Aorta (tissue), 5 donors: ENCODE measurements at regions of chr16 and their contacts with region 1.

Region 1: GRCh38 chr16:3880623-3881498 is at the start of gene CREBBP:
- DNase-seq: peak; percentile 89 to 93
- ATAC-seq: peak; percentile 95
- H3K4me3 ChIP-seq: peak within 1 kb of the TSS; percentile 99
- H3K27ac ChIP-seq: peak within 1 kb of the TSS; percentile 82 to 98
- H3K4me1 ChIP-seq: no peaks in the 10 kb centered on the region
- H3K27me3 ChIP-seq: no peaks in the 10 kb centered on the region
- total RNA-seq, gene CREBBP: 80.4 to 103 TPM

Region 2: DNA sequence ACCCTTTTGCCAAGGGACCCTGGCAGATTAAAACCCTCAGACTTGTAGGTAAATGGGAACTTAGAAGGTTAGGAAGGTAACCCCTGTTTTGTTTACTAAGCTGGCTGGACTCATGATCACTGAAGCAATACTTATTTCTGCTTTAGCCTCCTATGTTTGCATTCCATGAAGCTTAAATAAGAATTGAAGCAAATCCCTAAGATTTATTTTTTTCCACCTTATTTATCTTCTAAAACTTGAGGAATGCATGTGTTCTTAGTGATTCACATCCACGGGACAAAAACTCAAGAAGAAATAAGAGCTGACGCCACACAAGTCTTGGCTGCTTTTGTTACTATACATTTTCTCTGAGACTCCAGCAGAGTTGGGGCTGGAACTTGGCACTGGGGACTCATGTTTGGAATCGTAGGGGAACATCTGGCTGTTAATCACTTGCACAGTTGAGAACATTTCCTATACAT is 344.6 kb before region 1 on chr16:
- intact Hi-C with region 1: loop called (anchors 10 kb)
- DNase-seq: no peak
- ATAC-seq: no peak
- H3K4me3 ChIP-seq: no peak overlapping the region
- H3K27ac ChIP-seq: peak overlapping the region; percentile 89 to 91
- H3K4me1 ChIP-seq: peaks cover 0 to 5% of the 10 kb centered on the region in 2 donors
- H3K27me3 ChIP-seq: no peaks in the 10 kb centered on the region

Region 3: DNA sequence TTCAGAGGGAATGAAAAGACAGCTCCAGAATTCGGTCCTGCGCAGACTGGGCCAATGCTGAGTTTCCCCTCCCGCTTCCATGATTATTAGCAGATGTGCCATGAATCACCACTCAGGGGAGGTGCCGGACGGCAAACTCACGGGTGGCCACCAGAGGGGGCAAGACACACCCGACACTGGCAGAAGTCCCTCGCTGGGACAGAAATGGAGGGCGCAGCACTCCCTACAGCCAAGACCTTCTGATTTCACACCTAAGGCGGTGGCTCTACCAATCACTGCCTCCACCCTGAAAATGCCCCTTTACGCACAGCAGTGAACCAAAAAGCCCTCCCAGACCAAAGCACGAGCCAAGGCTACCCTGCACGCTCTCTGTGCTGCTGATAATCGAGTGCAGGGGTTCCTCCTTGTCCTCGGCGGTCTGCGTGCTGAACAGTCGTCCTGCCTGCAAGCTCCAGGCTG is 190.4 kb before region 1 on chr16:
- intact Hi-C with region 1: loop called in 1 of 2 experiments (anchors 1 kb)
- DNase-seq: peak; percentile 93 to 97
- ATAC-seq: peak; percentile 96
- H3K4me3 ChIP-seq: no peak overlapping the region
- H3K27ac ChIP-seq: peak overlapping the region in 1 of 2 donors; percentile 10
- H3K4me1 ChIP-seq: no peaks in the 10 kb centered on the region
- H3K27me3 ChIP-seq: no peaks in the 10 kb centered on the region

Region 4: DNA sequence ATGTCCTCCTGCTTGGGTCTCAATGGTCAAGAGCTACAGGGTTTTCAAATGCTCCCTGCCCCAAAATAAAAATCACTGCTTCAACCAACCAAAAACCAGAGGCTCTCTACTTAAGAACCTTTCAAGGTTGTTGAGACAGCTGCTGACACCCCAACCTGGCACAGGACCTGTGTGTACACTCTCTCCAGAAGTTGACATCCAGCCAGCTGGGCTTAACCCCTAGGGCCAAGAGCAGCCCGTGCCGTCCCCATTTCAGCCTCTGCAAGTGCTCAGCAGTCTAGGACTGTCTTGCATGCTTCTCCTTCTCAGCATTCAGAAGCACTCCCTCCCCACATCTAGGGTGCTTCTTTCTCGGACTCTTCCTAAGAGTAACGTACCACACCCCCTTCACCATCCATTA is 104.5 kb before region 1 on chr16:
- intact Hi-C with region 1: loop called in 1 of 2 experiments (anchors 5 kb)
- DNase-seq: no peak
- ATAC-seq: no peak
- H3K4me3 ChIP-seq: no peak overlapping the region
- H3K27ac ChIP-seq: no peak overlapping the region
- H3K4me1 ChIP-seq: no peaks in the 10 kb centered on the region
- H3K27me3 ChIP-seq: no peaks in the 10 kb centered on the region

Region 5: GRCh38 chr16:3793161-3793576 is 87.7 kb before region 1 on chr16:
- intact Hi-C with region 1: loop called in 1 of 2 experiments (anchors 5 kb)
- DNase-seq: peak in 1 of 2 donors; percentile 56
- ATAC-seq: peak; percentile 79
- H3K4me3 ChIP-seq: no peak overlapping the region
- H3K27ac ChIP-seq: peak overlapping the region in 1 of 2 donors; percentile 55
- H3K4me1 ChIP-seq: peaks cover 2 to 5% of the 10 kb centered on the region in 2 donors
- H3K27me3 ChIP-seq: no peaks in the 10 kb centered on the region